Psoas muscle (tissue), 8 donors: ENCODE measurements at regions of chr6 and their contacts with region 1.

Region 1: DNA sequence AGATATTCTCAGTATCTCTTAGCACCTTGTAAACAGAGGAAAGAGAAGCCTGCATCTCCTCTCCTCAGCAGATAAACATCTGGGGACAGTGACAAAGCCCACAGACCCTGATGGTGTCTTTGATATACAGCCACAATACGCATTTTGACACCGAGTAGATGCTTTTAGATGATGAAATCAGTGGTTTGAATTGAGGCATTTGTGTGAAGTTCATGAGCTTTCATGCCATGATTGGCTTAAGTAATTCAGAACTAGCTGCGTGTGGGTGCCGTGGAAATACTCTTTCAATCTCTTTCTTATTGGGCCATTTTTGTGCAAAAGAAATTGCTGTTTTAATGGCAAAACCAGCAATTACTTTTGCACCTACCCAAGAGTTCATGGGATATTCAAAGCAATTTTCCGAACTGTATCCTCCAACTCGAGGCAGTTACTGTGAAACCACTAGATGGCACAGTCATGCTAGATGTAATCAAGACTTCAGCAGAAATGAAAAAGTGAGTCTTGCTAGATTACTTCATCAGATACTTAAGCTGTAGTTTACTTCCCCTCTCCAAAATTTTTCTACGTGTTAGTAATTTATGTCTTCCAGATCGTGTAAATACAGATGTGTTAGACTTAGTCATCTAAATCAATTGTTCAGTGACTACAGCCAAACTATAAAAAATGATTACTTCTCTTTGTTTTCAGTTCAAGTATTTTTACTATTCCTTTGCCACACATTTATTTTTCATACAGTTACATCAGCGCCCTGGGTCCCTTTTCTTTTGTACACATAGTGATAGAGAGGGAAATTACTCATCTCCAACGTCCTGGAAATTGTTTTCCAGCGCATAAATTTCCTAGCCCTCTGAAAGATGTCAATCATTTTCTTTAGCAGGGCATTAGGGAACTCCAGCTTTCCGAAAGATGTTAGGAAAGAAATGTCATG is 49.4 kb downstream of the IYD start:
- DNase-seq: no peak
- ATAC-seq: peak; percentile 69 to 92 (median 80)
- H3K4me3 ChIP-seq: peak overlapping the region; percentile 51
- H3K27ac ChIP-seq: peak overlapping the region; percentile 56
- H3K4me1 ChIP-seq: no peaks in the 10 kb centered on the region
- H3K27me3 ChIP-seq: peaks cover 0 to 3% (median 0%) of the 10 kb centered on the region in 3 donors
- CTCF ChIP-seq: peak; percentile 76

Region 2: GRCh38 chr6:150600301-150601017 is 182.3 kb after region 1 on chr6:
- intact Hi-C with region 1: loop called in 1 of 2 experiments (anchors 5 kb)
- DNase-seq: peak; percentile 52 to 66
- ATAC-seq: peak; percentile 25 to 74 (median 54)
- H3K4me3 ChIP-seq: peak overlapping the region; percentile 71
- H3K27ac ChIP-seq: peak overlapping the region; percentile 69
- H3K4me1 ChIP-seq: no peaks in the 10 kb centered on the region
- H3K27me3 ChIP-seq: peaks cover 0 to 50% (median 0%) of the 10 kb centered on the region in 3 donors
- CTCF ChIP-seq: peak; percentile 33

Region 3: DNA sequence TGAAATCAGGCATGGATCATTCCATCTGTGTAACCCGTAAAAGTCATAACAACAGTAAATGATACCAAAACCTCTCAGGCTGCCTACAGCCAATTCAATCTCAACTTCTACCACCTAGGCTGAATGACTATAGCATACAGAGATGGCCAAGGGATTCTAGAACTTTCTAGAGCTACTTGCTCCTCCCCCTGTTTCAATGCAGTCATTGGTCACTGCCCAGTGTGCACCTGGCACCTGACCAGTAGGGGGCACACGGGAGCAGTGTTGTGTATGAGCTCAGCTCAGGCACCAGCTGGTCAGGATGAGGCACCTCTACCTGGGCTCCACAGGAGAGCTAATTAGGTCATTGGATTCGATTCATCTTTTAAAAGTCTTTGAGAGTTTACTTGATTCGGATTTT is 267.7 kb after region 1 on chr6:
- intact Hi-C with region 1: loop called in 1 of 2 experiments (anchors 5 kb)
- DNase-seq: no peak
- ATAC-seq: no peak
- H3K4me3 ChIP-seq: no peak overlapping the region
- H3K27ac ChIP-seq: peak overlapping the region; percentile 27
- H3K4me1 ChIP-seq: no peaks in the 10 kb centered on the region
- H3K27me3 ChIP-seq: no peaks in the 10 kb centered on the region
- CTCF ChIP-seq: peak; percentile 45